Activated CD4-positive, alpha-beta memory T cell treated with anti-CD3 and anti-CD28 coated beads for 36 hours (primary cell): ENCODE measurements at regions of chr3 and their contacts with region 1.

Region 1: GRCh38 chr3:42547401-42547945 is 34.3 kb downstream of the SEC22C start:
- DNase-seq: peak; percentile 74
- H3K4me3 Mint-ChIP-seq: no peak overlapping the region
- H3K27ac Mint-ChIP-seq: no peak overlapping the region
- H3K4me1 Mint-ChIP-seq: peaks cover 5% of the 10 kb centered on the region
- H3K27me3 Mint-ChIP-seq: no peaks in the 10 kb centered on the region

Region 2: GRCh38 chr3:42518800-42519567 is 28.5 kb before region 1 on chr3:
- CTCF ChIA-PET with region 1: interaction called, 13 read pairs
- POLR2A ChIA-PET with region 1: no interaction called
- intact Hi-C with region 1: no loop called
- DNase-seq: peak; percentile 61
- H3K4me3 Mint-ChIP-seq: no peak overlapping the region
- H3K27ac Mint-ChIP-seq: peak overlapping the region; percentile 81
- H3K4me1 Mint-ChIP-seq: peaks cover 29% of the 10 kb centered on the region
- H3K27me3 Mint-ChIP-seq: no peaks in the 10 kb centered on the region

Region 3: DNA sequence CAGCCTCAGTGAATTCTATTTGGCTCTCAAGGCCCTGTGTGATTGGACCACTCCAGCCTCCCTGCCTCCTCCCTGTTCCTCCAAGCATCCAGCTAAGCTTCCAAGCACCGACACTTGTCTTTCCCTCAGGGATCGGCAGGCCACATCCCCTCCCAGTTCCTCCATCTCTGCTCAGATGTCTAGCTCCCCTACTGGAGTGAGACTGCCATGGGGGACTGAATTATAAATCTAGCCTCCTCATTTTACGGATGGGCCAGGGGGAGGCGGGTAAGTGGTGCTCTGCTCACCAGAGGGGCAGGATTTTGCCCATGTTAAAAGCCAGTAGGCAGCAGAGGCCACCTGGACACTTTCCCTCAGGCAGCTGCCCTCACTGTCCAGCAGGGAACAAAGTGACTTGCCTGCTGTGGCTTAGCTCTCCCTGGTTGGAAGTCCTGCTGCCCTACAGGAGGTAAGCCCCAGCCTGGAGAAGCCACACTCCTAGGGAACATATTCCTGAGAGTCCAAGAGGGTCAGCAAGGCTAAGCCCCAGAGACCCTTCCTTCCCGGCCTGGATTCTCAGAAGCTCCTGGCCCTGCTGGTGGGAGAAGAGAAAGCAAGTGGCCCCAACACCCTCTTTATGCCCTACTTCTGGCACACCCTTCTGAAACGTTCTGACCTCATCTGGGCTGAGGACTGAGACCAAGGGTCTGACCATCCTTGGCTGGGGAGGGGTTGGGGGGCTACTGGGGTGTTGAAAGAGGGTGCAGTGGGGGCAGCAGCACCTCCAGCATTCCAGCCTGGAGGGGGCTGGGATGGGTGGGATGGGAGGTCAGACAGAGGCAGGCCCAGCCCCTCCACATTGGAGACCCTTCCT is 164.2 kb after region 1 on chr3:
- CTCF ChIA-PET with region 1: no interaction called
- POLR2A ChIA-PET with region 1: no interaction called
- intact Hi-C with region 1: no loop called
- DNase-seq: no peak
- H3K4me3 Mint-ChIP-seq: no peak overlapping the region
- H3K27ac Mint-ChIP-seq: no peak overlapping the region
- H3K4me1 Mint-ChIP-seq: no peaks in the 10 kb centered on the region
- H3K27me3 Mint-ChIP-seq: no peaks in the 10 kb centered on the region